ENCODE measurements at regions of chr3 and their contacts with region 1.

Region 1: GRCh38 chr3:62332835-62333244 is 40.5 kb downstream of the FEZF2 start:
- DNase-seq: no peak
- H3K4me3 ChIP-seq: no peak overlapping the region
- H3K27ac ChIP-seq: no peak overlapping the region
- H3K27me3 ChIP-seq: no peaks in the 10 kb centered on the region
- CTCF ChIP-seq: peak; percentile 48 to 84 (median 70)

Region 2: DNA sequence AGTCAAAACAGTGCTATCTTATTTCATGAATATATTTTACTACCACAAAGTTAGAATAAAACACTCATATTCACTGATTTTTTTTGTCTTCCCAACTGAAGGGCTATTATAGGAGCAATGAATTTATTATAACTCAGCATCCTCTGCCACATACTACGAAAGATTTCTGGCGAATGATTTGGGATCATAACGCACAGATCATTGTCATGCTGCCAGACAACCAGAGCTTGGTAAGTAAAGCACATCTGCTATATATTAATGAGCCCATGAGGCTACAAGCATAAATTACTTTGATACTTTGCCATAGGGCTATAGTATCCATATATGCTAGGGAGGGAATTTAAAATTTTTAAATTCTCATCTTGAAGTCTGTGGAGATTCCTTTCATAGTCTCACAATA is 55.4 kb before region 1 on chr3:
- intact Hi-C with region 1: no loop called
- DNase-seq: no peak
- H3K4me3 ChIP-seq: no peak overlapping the region
- H3K27ac ChIP-seq: no peak overlapping the region
- H3K27me3 ChIP-seq: no peaks in the 10 kb centered on the region
- CTCF ChIP-seq: no peak

Region 3: GRCh38 chr3:62558549-62559112 is 225.8 kb after region 1 on chr3:
- intact Hi-C with region 1: loop called (anchors 5 kb)
- DNase-seq: peak in 1 of 10 donors; percentile 25
- H3K4me3 ChIP-seq: no peak overlapping the region
- H3K27ac ChIP-seq: no peak overlapping the region
- H3K27me3 ChIP-seq: no peaks in the 10 kb centered on the region
- CTCF ChIP-seq: peak in 53 of 56 donors; percentile 10 to 70 (median 50)

Region 4: GRCh38 chr3:62954580-62954979 is 621.7 kb after region 1 on chr3:
- intact Hi-C with region 1: no loop called
- DNase-seq: peak in 1 of 10 donors; percentile 13
- H3K4me3 ChIP-seq: peak overlapping the region in 42 of 59 donors; percentile 4 to 55 (median 34)
- H3K27ac ChIP-seq: no peak overlapping the region
- H3K27me3 ChIP-seq: peaks cover 0 to 3% (median 0%) of the 10 kb centered on the region in 45 donors
- CTCF ChIP-seq: no peak